Ascending aorta (tissue), 2 donors: ENCODE measurements at regions of chr1 and their contacts with region 1.

Region 1: DNA sequence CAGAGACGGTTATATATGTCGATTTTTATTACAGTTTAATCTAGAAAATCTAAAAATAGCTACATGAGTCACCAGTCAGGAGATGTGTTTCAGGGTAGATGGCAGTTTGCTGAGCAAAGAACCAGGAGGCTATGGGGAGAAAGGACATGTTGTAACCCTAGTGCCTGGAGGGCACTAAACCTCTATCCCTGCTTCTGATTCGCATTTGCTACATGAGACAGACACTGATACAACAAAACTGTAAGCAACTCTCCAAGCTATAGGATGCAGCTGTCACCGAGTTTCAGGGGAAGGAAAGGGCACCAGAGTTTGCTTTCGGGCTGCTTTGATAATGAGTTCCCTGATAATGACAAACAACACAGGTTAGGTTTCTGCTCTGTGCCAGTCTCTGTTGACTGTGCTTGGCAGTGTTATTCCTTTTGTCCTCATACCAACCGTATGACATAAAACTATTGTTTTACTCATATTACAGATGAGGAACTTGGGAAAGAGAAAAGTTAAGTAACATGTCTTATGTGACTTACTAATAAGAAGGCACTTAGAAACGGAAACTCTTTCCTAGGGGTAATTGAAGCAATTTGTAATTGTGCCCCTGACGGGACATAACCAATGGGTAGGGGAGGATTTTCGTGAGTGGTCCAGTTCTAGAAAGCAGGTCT is 43.1 kb downstream of the C1orf198 start:
- DNase-seq: peak in 1 of 2 donors; percentile 66
- H3K4me3 ChIP-seq: peak overlapping the region; percentile 24 to 32
- H3K27ac ChIP-seq: peak overlapping the region; percentile 90 to 94
- H3K4me1 ChIP-seq: peaks cover 24 to 51% of the 10 kb centered on the region in 2 donors
- H3K27me3 ChIP-seq: no peaks in the 10 kb centered on the region
- CTCF ChIP-seq: no peak

Region 2: GRCh38 chr1:230599926-230600653 is 225.1 kb before region 1 on chr1:
- intact Hi-C with region 1: no loop called
- DNase-seq: no peak
- H3K4me3 ChIP-seq: no peak overlapping the region
- H3K27ac ChIP-seq: no peak overlapping the region
- H3K4me1 ChIP-seq: no peaks in the 10 kb centered on the region
- H3K27me3 ChIP-seq: no peaks in the 10 kb centered on the region
- CTCF ChIP-seq: no peak

Region 3: DNA sequence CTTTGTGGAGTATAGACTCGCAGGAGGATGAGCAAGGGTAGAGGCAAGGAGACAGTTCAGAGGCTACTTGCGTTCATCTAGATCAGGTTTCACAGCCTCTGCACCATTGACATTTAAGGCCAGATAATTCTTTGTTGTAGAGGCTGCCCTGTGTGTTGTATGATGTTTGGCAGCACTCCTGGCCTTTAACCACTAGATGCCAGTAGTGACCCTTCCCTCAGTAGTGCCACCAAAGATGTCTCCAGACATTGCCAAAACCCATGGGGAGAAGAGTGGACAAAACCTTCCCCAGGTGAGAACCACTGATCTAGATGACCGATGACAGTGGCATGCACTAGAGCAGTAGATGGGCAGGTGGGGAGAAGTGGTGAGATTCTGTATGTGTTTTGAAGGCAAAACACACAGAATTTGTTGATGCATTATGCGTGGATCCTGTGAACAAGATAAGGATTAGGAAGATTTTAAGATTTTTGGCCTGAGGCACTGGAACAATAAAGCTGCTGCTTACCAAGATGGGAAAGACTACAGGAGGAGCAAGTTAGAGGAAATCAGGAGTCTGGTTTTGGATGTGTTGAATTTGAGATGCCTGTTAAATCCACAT is 192.8 kb before region 1 on chr1:
- intact Hi-C with region 1: no loop called
- DNase-seq: no peak
- H3K4me3 ChIP-seq: no peak overlapping the region
- H3K27ac ChIP-seq: no peak overlapping the region
- H3K4me1 ChIP-seq: no peaks in the 10 kb centered on the region
- H3K27me3 ChIP-seq: no peaks in the 10 kb centered on the region
- CTCF ChIP-seq: peak in 1 of 3 experiments; percentile 13

Region 4: GRCh38 chr1:230807029-230807428 is 18.2 kb before region 1 on chr1:
- intact Hi-C with region 1: loop called (anchors 2 kb)
- DNase-seq: peak; percentile 40 to 86
- H3K4me3 ChIP-seq: no peak overlapping the region
- H3K27ac ChIP-seq: peak overlapping the region; percentile 76 to 82
- H3K4me1 ChIP-seq: peaks cover 0 to 23% of the 10 kb centered on the region in 2 donors
- H3K27me3 ChIP-seq: no peaks in the 10 kb centered on the region
- CTCF ChIP-seq: no peak

Region 5: DNA sequence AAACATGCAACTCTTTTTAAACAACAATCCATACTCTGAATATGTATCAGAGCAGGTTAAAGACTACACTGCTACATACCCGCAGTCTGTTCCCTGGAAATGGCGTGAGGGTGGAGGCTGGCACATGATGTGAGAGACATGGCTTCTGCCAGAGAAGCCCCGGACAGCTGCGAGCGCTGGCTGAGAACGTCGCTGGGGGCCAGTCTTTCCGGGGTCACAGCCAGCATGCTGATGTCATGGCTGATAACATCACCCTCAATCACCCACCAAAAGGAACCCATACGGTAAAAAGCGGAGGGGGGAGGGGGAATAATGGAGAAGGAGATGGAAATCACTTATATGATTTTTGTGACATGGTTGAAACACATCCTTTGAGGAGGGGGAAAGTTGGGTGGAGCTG is 14.0 kb after region 1 on chr1:
- intact Hi-C with region 1: no loop called
- DNase-seq: peak in 1 of 2 donors; percentile 46
- H3K4me3 ChIP-seq: no peak overlapping the region
- H3K27ac ChIP-seq: peak overlapping the region in 1 of 2 donors; percentile 19
- H3K4me1 ChIP-seq: peaks cover 0 to 22% of the 10 kb centered on the region in 2 donors
- H3K27me3 ChIP-seq: no peaks in the 10 kb centered on the region
- CTCF ChIP-seq: no peak

Region 6: GRCh38 chr1:230849451-230850224 is 24.4 kb after region 1 on chr1:
- intact Hi-C with region 1: loop called (anchors 2 kb)
- DNase-seq: peak; percentile 56 to 95
- H3K4me3 ChIP-seq: peak overlapping the region in 1 of 2 donors; percentile 9
- H3K27ac ChIP-seq: peak overlapping the region; percentile 94 to 98
- H3K4me1 ChIP-seq: peaks cover 24 to 66% of the 10 kb centered on the region in 2 donors
- H3K27me3 ChIP-seq: no peaks in the 10 kb centered on the region
- CTCF ChIP-seq: no peak

Region 7: GRCh38 chr1:230878591-230878990 is 53.4 kb after region 1 on chr1:
- intact Hi-C with region 1: no loop called
- DNase-seq: peak in 1 of 2 donors; percentile 75
- H3K4me3 ChIP-seq: no peak overlapping the region
- H3K27ac ChIP-seq: no peak overlapping the region
- H3K4me1 ChIP-seq: peaks cover 0 to 4% of the 10 kb centered on the region in 2 donors
- H3K27me3 ChIP-seq: no peaks in the 10 kb centered on the region
- CTCF ChIP-seq: no peak

Region 8: DNA sequence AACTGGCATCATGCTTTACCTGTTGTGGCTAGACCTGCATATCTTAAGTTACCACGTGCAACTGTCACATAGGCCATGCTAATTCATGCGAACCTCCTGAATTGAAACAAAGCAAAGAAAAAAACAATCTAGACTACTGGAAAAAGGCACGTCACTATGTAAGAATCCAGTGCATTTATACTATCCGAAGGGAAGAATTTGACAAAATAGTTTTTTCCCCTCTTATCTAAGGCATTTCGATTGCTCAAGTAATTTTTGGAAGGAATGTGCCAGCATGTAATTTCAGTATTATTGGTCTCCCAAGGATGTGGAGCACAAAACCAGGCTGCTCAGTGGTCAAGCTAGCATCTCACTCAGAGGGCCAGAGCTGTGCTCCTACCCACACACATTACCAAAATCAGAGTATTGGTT is 74.7 kb after region 1 on chr1:
- intact Hi-C with region 1: loop called (anchors 2 kb)
- DNase-seq: peak in 1 of 2 donors; percentile 73
- H3K4me3 ChIP-seq: no peak overlapping the region
- H3K27ac ChIP-seq: peak overlapping the region in 1 of 2 donors; percentile 34
- H3K4me1 ChIP-seq: peaks cover 0 to 21% of the 10 kb centered on the region in 2 donors
- H3K27me3 ChIP-seq: no peaks in the 10 kb centered on the region
- CTCF ChIP-seq: no peak